GM12878 (cell line): ENCODE measurements at regions of chr17 and their contacts with region 1.

Region 1: DNA sequence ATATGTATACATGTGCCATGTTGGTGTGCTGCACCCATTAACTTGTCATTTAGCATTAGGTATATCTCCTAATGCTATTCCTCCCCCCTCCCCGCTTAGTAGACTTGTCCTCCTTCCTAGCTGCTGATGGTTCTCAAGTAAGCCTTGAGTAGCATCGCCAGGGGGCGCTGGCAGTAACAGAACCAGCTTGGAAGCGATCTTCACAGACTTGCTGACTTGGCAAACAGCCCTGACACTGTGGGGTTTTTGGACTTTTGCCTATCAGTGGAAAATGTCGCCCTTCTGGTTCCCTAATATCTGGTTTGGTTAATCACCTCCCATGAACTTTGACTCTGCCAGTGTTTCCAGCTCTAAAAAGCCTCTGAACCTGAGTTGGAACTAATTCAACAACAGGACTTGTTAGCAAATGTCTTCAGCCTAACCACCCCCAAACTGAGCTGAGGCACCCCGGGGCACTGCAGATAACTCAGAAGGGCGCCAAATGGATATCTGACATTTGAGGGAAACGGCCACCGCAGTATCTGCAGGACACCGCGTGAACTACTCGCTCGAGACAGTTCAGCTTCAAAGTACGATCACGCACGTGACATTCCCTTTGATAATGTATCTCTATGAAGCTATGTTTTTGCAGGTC is 15.4 kb upstream of the SPATA32 start:
- DNase-seq: peak; percentile 66
- ATAC-seq: peak; percentile 99
- H3K4me3 ChIP-seq: no peak overlapping the region
- H3K27ac ChIP-seq: 0 out of 2 replicates have a peak overlapping the region, but pooled peaks have one; percentile 22
- H3K4me1 ChIP-seq: peaks cover 4% of the 10 kb centered on the region; the same call in 1 of the 2 replicates
- H3K27me3 ChIP-seq: no peaks in the 10 kb centered on the region
- CTCF ChIP-seq: peak; percentile 73 to 85 (median 81)
- EP300 ChIP-seq: no peak
- POLR2A ChIP-seq: no peak
- RAD21 ChIP-seq: peak; percentile 94

Region 2: GRCh38 chr17:44677136-44677535 is 600.2 kb before region 1 on chr17:
- CTCF ChIA-PET with region 1: no interaction called
- POLR2A ChIA-PET with region 1: no interaction called
- RAD21 ChIA-PET with region 1: no interaction called
- SMC1A ChIA-PET with region 1: no interaction called
- in situ Hi-C with region 1: no loop called
- intact Hi-C with region 1: no loop called
- DNase-seq: no peak
- ATAC-seq: no peak
- H3K4me3 ChIP-seq: no peak overlapping the region
- H3K27ac ChIP-seq: no peak overlapping the region
- H3K4me1 ChIP-seq: no peaks in the 10 kb centered on the region
- H3K27me3 ChIP-seq: no peaks in the 10 kb centered on the region
- CTCF ChIP-seq: no peak
- EP300 ChIP-seq: no peak
- POLR2A ChIP-seq: no peak
- RAD21 ChIP-seq: no peak

Region 3: DNA sequence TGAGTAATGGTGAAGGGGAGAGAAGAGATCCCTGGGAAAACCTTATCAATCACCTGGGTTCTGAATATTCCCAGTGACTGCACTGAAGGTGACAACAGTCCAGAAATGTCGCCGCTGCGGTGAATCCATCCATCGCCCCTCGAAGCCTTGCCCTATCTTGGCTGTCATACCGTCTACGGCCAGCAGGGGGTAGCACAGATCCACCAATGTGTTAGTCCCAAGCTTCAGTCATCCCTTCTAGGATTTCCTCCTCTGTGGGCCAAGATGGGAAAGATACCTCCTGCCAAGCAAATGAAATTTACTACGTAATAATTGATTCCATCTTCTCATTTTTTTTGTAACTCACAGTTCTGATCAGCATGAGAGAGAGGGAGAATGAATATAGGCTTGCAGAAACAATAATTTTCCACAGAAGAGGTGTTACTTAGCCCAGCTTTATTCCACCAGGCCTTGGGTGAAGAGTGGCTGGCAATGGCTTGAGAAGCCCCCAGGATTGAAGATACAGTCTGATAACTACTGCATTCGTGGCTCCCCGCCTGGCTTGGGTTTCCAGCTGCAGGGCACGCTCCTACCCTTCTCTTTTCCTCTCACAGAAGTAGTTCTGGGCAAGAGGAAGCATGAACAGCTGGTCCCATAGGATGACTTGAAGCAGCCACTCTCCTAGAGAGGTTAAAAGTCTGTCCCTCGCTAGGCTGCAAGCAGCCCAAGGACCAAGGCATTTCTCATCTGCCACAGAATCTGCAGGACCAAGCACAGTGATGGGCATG is 58.3 kb before region 1 on chr17:
- CTCF ChIA-PET with region 1: interaction called, 104 read pairs
- POLR2A ChIA-PET with region 1: no interaction called
- RAD21 ChIA-PET with region 1: interaction called, 44 read pairs
- SMC1A ChIA-PET with region 1: interaction called, 51 read pairs
- in situ Hi-C with region 1: no loop called
- intact Hi-C with region 1: loop called (anchors 5 kb)
- DNase-seq: no peak
- ATAC-seq: peak; percentile 42
- H3K4me3 ChIP-seq: no peak overlapping the region
- H3K27ac ChIP-seq: no peak overlapping the region
- H3K4me1 ChIP-seq: peaks cover 13% of the 10 kb centered on the region
- H3K27me3 ChIP-seq: no peaks in the 10 kb centered on the region
- CTCF ChIP-seq: peak; percentile 92 to 97 (median 94)
- EP300 ChIP-seq: no peak
- POLR2A ChIP-seq: no peak
- RAD21 ChIP-seq: peak; percentile 97

Region 4: GRCh38 chr17:45247429-45248131 is 29.8 kb before region 1 on chr17:
- CTCF ChIA-PET with region 1: interaction called, 5 read pairs
- POLR2A ChIA-PET with region 1: no interaction called
- RAD21 ChIA-PET with region 1: interaction called, 11 read pairs
- SMC1A ChIA-PET with region 1: interaction called, 6 read pairs
- in situ Hi-C with region 1: no loop called
- intact Hi-C with region 1: no loop called
- DNase-seq: peak; percentile 78
- ATAC-seq: peak; percentile 95
- H3K4me3 ChIP-seq: peak overlapping the region; percentile 89
- H3K27ac ChIP-seq: peak overlapping the region; percentile 98
- H3K4me1 ChIP-seq: peaks cover 14% of the 10 kb centered on the region
- H3K27me3 ChIP-seq: no peaks in the 10 kb centered on the region
- CTCF ChIP-seq: no peak
- EP300 ChIP-seq: no peak; a peak in 1 of 4 replicates
- POLR2A ChIP-seq: peak; percentile 91
- RAD21 ChIP-seq: no peak

Region 5: GRCh38 chr17:45299339-45299738 is 22.0 kb after region 1 on chr17:
- CTCF ChIA-PET with region 1: interaction called, 38 read pairs
- POLR2A ChIA-PET with region 1: interaction called, 12 read pairs
- RAD21 ChIA-PET with region 1: interaction called, 35 read pairs
- SMC1A ChIA-PET with region 1: interaction called, 58 read pairs
- in situ Hi-C with region 1: no loop called
- intact Hi-C with region 1: no loop called
- DNase-seq: no peak
- ATAC-seq: peak; percentile 3; the same call in 2 of the 3 replicates
- H3K4me3 ChIP-seq: no peak overlapping the region
- H3K27ac ChIP-seq: peak overlapping the region; percentile 89
- H3K4me1 ChIP-seq: peaks cover 89% of the 10 kb centered on the region
- H3K27me3 ChIP-seq: no peaks in the 10 kb centered on the region
- CTCF ChIP-seq: no peak
- EP300 ChIP-seq: no peak
- POLR2A ChIP-seq: no peak
- RAD21 ChIP-seq: no peak

Region 6: DNA sequence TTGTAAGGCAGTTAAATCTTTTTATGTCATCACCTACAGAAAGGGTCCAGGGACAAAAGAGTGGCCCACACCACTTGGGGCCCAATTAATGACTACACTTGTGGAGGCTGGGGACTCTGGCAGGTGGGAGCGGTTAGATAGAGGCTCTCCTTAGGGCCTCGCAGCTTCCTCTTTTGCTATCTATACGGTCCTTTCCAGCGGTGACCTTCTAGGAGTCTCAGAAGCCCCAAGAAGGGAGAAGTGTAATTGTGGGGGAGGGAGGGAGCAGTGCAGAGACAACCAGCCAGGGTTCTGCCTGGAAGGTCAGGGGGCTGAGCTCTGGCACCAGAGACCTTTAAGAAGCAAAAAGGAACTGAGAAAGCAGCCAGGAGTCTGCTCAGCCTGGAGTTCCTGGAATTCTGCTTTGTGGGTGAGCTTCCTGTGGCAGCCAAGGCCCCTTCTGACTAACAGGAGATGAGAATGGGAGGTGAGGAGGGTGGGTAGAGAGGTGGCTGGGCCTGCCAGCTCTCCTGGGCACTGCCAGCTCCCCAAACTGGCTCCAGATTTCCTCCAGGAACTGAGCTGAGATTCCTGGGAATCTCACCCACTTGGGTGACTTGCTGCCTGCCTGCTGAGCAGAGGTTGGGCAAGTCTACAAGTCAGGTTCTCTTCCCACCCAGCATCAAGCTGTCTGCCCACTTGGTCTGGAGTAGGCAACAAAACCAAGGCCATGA is 55.8 kb after region 1 on chr17:
- CTCF ChIA-PET with region 1: interaction called, 4 read pairs
- POLR2A ChIA-PET with region 1: no interaction called
- RAD21 ChIA-PET with region 1: interaction called, 24 read pairs
- SMC1A ChIA-PET with region 1: interaction called, 8 read pairs
- in situ Hi-C with region 1: no loop called
- intact Hi-C with region 1: no loop called
- DNase-seq: no peak
- ATAC-seq: peak; percentile 78
- H3K4me3 ChIP-seq: peak overlapping the region; percentile 3; the same call in 1 of the 2 replicates
- H3K27ac ChIP-seq: peak overlapping the region; percentile 33
- H3K4me1 ChIP-seq: peaks cover 43% of the 10 kb centered on the region
- H3K27me3 ChIP-seq: no peaks in the 10 kb centered on the region
- CTCF ChIP-seq: no peak
- EP300 ChIP-seq: peak in 1 of 2 experiments; percentile 42; a peak in 1 of 4 replicates
- POLR2A ChIP-seq: no peak
- RAD21 ChIP-seq: no peak

Region 7: DNA sequence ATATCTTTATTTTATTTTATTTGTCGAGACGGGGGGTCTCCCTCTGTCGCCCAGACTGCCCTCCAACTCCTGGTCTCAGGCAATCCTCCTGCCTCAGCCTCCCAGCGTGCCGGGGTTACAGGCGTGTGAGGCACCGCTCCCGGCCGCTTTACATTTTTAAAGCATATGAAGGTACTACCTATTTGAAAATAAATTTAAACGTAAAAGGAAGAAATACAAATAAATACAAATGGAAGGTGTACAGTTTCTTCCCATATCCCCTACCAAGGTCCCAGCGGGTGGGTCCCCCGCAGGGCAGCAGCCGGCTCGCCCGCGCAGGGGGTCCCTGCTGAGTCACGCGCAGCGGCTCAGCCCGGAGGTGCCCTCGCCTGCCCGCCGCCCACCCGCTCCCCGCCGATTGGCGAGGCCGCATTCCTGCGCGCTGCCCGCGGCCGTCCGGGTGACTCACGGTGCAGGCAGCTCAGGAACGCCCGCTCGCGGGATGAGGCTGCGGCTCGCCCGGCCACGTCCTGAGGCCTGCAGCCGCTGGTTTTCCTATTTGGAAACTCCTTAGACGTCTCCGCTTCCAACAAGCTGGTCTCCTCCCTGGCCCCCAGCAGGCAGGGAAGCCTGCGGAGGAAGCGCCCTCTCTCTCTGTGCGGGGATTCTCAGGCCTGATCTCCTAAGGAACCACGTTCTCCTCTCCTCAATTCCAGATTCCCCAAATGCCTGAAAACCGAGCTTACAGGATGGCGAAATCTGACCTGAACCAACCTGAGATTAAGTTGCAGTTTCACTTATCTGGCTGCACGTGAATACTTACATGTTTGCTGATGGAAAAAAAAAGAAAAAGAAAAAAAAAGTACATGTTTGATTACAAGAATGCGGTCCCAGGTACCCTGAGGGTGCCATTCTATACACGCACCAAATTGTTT is 94.3 kb after region 1 on chr17:
- CTCF ChIA-PET with region 1: interaction called, 20 read pairs
- POLR2A ChIA-PET with region 1: no interaction called
- RAD21 ChIA-PET with region 1: interaction called, 12 read pairs
- SMC1A ChIA-PET with region 1: interaction called, 17 read pairs
- in situ Hi-C with region 1: no loop called
- intact Hi-C with region 1: no loop called
- DNase-seq: no peak
- ATAC-seq: no peak
- H3K4me3 ChIP-seq: no peak overlapping the region
- H3K27ac ChIP-seq: 0 out of 2 replicates have a peak overlapping the region, but pooled peaks have one; percentile 17
- H3K4me1 ChIP-seq: peaks cover 33% of the 10 kb centered on the region
- H3K27me3 ChIP-seq: no peaks in the 10 kb centered on the region
- CTCF ChIP-seq: no peak
- EP300 ChIP-seq: no peak
- POLR2A ChIP-seq: no peak
- RAD21 ChIP-seq: no peak

Region 8: GRCh38 chr17:45394913-45395568 is 117.7 kb after region 1 on chr17:
- CTCF ChIA-PET with region 1: interaction called, 291 read pairs
- POLR2A ChIA-PET with region 1: interaction called, 10 read pairs
- RAD21 ChIA-PET with region 1: interaction called, 38 read pairs
- SMC1A ChIA-PET with region 1: interaction called, 184 read pairs
- in situ Hi-C with region 1: no loop called
- intact Hi-C with region 1: no loop called
- DNase-seq: no peak
- ATAC-seq: peak; percentile 80
- H3K4me3 ChIP-seq: no peak overlapping the region
- H3K27ac ChIP-seq: no peak overlapping the region
- H3K4me1 ChIP-seq: no peaks in the 10 kb centered on the region
- H3K27me3 ChIP-seq: no peaks in the 10 kb centered on the region
- CTCF ChIP-seq: peak; percentile 54 to 70 (median 58); a peak in 5 of 6 replicates
- EP300 ChIP-seq: no peak
- POLR2A ChIP-seq: 0 out of 2 replicates have a peak, but pooled peaks have one; percentile 14
- RAD21 ChIP-seq: peak; percentile 79